Activated B cell treated with CpG ODN at 0.5 μM for 24 hours (primary cell): ENCODE measurements at regions of chr6 and their contacts with region 1.

Region 1: DNA sequence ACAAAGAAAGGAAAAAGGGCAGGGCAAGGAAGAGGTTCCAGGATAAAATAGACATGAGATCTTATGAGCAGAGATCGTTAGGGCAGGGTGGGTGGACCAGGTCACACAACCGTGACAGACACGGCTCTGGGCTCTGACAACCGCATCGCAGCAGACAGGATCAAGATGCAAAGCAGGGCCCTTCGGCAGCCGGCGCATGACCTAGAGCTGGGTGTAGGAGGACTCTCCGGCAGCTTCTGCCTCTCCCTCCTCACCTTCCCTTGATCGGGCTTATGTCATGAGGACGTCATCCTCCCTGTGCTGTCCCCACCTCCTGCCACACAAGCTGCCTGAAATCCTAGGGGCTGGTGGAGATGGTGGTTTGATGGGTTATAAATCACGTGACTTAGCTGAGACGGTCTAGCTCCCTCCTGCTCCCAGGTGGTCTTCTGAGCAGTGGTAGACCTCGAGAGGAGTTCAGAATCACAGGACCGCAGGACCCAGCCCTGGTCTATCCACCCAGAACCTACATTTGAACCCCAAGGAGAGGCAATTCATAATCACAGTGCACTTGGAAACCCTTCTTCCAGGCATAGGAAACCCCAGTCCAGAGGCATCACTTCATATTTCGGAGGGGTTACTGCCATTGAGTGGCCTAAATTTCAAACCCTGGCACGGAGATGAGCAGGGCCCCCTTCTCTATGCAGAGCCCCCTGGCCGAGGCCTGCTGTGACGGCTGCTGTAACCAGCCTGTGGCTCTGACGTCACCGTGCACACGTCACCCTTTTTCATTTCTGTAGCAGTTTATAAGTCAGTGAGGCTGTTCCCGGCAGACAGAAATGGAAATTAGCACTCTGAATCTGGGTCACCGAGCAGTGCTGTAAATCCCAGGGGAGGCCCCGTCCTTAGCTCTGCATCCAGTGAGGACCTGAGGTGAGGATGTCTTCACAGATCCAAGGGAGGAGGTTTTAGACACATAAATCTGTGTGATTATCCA is 8.7 kb upstream of the CCR6 start:
- DNase-seq: peak; percentile 75
- ATAC-seq: peak; percentile 78
- H3K4me3 Mint-ChIP-seq: peak overlapping the region; percentile 84
- H3K27ac Mint-ChIP-seq: peak overlapping the region; percentile 94
- H3K4me1 Mint-ChIP-seq: peaks cover 96% of the 10 kb centered on the region
- H3K27me3 Mint-ChIP-seq: no peaks in the 10 kb centered on the region
- CTCF ChIP-seq: no peak

Region 2: DNA sequence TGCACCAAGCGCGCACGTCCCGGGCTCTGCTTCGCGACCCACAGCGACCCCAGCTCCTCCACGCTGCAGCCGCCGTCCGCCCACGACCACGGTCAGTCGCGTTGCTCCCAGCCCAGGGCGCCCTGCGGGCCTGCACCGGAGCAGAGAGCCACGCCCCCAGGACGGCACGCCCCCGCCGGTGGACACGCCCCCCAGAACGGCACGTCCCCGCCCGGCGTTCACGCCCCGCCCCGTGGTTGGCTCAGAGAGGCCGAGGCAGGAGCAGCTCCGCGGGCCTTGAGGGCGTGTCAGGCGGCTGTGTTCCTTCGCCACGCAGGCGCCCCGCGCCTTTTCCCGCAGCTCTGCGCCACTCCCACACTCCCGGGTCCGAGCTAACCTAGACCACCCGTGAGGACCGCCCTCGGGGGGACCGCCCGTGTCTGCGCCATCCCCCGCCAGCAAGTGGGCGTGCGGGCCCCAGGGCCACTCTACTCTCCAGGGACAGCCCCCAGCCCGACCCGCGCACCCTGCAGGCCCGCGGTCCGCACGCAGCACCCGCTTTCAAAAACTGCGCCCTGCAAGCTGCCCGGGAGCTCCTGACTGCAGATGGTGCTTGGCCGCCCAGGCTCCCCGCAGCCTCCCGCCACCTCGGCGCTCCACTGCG is 157.7 kb before region 1 on chr6 and contains the start of gene RNASET2:
- CTCF ChIA-PET with region 1: no interaction called
- POLR2A ChIA-PET with region 1: interaction called, 23 read pairs
- intact Hi-C with region 1: loop called (anchors 1 kb)
- DNase-seq: peak; percentile 100
- ATAC-seq: peak; percentile 82
- H3K4me3 Mint-ChIP-seq: peak within 1 kb of the TSS; percentile 91
- H3K27ac Mint-ChIP-seq: peak within 1 kb of the TSS; percentile 100
- H3K4me1 Mint-ChIP-seq: peaks cover 76% of the 10 kb centered on the region
- H3K27me3 Mint-ChIP-seq: no peaks in the 10 kb centered on the region
- CTCF ChIP-seq: no peak
- total RNA-seq, gene RNASET2: 118 and 135 TPM in 2 replicates

Region 3: GRCh38 chr6:167073679-167074274 is 40.4 kb before region 1 on chr6:
- CTCF ChIA-PET with region 1: no interaction called
- POLR2A ChIA-PET with region 1: interaction called, 10 read pairs
- intact Hi-C with region 1: no loop called
- DNase-seq: no peak
- ATAC-seq: peak; percentile 71
- H3K4me3 Mint-ChIP-seq: no peak overlapping the region
- H3K27ac Mint-ChIP-seq: peak overlapping the region; percentile 48
- H3K4me1 Mint-ChIP-seq: peaks cover 44% of the 10 kb centered on the region
- H3K27me3 Mint-ChIP-seq: no peaks in the 10 kb centered on the region
- CTCF ChIP-seq: no peak

Region 4: DNA sequence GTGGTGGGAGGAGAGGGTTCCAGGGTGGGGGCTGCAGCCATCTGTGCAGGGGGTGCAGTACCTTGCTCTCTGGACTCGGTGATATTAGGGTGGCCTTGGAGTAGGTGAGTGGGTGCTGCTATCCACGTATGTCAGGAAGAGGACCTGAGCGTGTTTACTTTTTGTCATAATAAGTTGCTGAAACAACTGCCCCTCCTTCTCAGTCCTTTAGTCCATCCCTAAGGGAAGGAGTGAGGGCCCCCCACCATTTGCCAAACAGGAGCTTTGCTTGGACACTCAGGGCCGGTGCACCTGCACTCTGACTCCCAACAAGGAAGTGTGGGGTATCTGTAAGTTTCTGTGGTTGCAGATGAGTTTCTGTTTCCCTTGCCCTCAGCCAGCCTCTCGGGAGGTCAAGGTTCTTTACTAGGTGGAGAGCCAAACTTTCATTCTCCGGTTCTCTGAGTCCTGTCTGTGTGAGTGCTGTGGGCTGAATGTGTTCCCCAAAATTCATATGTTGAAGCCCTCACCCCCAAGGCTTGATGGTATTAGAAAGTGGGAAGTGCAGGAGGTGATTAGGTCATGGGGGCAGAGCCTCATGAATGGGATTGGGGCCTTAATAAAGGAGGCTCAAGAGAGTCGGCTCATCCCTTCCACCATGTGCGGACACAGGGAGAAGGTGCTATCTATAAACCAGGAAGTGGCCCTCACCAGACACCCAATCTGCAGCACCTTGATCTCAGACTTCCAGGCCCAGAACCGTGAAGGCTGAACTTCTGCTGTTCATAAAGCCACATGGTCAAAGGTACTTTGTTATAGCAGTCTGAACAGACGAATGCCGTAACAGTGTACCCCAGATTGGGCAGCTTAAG is 11.0 kb before region 1 on chr6:
- CTCF ChIA-PET with region 1: interaction called, 12 read pairs
- POLR2A ChIA-PET with region 1: interaction called, 84 read pairs
- intact Hi-C with region 1: loop called (anchors 1 kb)
- DNase-seq: no peak
- ATAC-seq: peak; percentile 67
- H3K4me3 Mint-ChIP-seq: peak overlapping the region; percentile 58
- H3K27ac Mint-ChIP-seq: peak overlapping the region; percentile 98
- H3K4me1 Mint-ChIP-seq: peaks cover 96% of the 10 kb centered on the region
- H3K27me3 Mint-ChIP-seq: no peaks in the 10 kb centered on the region
- CTCF ChIP-seq: no peak

Region 5: DNA sequence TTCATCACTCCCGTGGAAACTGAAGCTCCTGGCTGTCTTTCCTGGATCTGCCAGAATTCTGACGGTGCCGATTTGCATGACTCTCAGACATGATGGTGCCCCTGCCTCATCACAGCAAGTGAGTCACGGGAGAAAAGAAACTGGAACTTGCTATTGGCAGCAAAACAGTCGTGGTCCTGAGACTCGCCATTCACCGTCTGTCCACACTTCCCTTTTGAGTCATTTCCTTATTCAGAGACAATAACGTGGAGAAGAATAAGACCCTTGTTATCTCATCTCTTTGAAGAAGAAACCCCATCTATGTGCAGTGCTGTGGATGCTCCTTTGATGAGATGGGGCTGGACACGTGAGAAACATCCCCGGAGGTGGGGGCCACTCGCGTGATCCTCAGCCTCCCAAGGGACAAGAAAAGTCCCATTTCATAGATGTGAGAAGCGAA is 39.3 kb after region 1 on chr6:
- CTCF ChIA-PET with region 1: no interaction called
- POLR2A ChIA-PET with region 1: interaction called, 8 read pairs
- intact Hi-C with region 1: loop called (anchors 1 kb)
- DNase-seq: no peak
- ATAC-seq: peak; percentile 62
- H3K4me3 Mint-ChIP-seq: peak overlapping the region; percentile 88
- H3K27ac Mint-ChIP-seq: peak overlapping the region; percentile 88
- H3K4me1 Mint-ChIP-seq: peaks cover 58% of the 10 kb centered on the region
- H3K27me3 Mint-ChIP-seq: no peaks in the 10 kb centered on the region
- CTCF ChIP-seq: no peak

Region 6: DNA sequence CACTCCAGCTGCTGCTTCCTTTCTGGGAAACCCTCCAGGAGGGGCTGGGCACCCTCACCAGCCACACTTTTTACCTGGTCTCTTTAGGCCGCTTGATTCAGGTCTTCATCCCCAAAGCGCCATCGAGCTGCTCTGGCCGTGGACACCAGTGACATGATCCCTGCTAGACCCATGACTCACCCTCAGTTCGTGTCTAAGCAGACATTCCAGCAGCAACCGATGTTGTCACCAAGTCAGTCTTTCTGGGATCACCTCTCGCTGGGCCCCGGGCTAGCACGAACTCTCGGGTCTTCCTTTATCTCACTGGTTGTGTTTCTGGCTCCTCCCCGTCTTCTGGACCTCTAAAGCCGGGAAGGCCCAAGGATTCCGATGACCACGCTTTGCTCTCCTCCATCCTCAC is 86.6 kb after region 1 on chr6:
- CTCF ChIA-PET with region 1: no interaction called
- POLR2A ChIA-PET with region 1: no interaction called
- intact Hi-C with region 1: no loop called
- DNase-seq: no peak
- ATAC-seq: no peak
- H3K4me3 Mint-ChIP-seq: no peak overlapping the region
- H3K27ac Mint-ChIP-seq: no peak overlapping the region
- H3K4me1 Mint-ChIP-seq: no peaks in the 10 kb centered on the region
- H3K27me3 Mint-ChIP-seq: peaks cover 21% of the 10 kb centered on the region
- CTCF ChIP-seq: no peak

Region 7: GRCh38 chr6:167298153-167298552 is 183.9 kb after region 1 on chr6:
- CTCF ChIA-PET with region 1: no interaction called
- POLR2A ChIA-PET with region 1: no interaction called
- intact Hi-C with region 1: no loop called
- DNase-seq: no peak
- ATAC-seq: no peak
- H3K4me3 Mint-ChIP-seq: no peak overlapping the region
- H3K27ac Mint-ChIP-seq: no peak overlapping the region
- H3K4me1 Mint-ChIP-seq: peaks cover 9% of the 10 kb centered on the region
- H3K27me3 Mint-ChIP-seq: peaks cover 14% of the 10 kb centered on the region
- CTCF ChIP-seq: no peak

Region 8: DNA sequence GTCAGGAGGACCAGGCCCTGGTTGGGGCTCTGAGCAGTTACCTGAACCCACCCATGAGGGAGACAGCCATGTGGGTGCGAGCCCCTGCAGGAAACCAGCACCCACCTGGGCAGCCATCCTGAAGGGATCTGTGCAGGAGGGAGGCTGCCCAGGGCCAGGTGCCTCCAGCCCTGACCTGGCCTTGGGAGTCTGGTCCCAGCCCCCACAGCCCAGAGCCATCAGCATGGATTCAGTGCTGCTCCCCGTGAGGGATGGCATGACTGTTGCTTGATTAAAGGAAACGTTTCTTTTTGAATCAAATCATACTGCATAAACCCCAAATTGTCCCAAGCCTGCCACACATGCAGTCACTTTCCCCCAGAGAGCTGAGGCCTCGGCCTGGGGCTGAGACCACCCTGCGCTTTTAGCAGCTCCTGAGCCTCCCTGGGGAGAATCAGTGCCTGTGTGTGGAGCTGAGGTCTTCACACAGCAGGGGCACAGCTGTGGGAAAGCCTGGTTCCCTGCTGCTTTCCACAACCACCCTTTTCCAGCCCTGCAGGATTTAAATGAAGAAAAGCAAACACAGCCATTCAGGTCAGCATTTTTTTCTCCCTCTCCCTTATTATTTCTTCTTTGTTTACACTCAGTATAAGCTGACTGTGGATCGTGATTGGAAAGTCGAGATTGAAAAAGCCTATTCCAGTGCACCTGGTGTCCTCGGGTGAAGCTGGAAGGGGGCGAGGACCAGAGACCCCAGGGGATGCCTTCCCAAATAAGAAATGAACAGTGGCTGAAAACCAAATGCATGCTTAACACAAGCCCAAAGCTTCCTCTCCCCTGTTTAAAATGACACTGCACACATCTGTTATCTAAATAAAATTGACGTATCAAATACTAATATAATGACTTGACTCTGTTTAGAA is 1610.7 kb after region 1 on chr6:
- CTCF ChIA-PET with region 1: no interaction called
- POLR2A ChIA-PET with region 1: no interaction called
- intact Hi-C with region 1: no loop called
- DNase-seq: no peak
- ATAC-seq: no peak
- H3K4me3 Mint-ChIP-seq: no peak overlapping the region
- H3K27ac Mint-ChIP-seq: no peak overlapping the region
- H3K4me1 Mint-ChIP-seq: no peaks in the 10 kb centered on the region
- H3K27me3 Mint-ChIP-seq: no peaks in the 10 kb centered on the region
- CTCF ChIP-seq: no peak